PC-9 (cell line): ENCODE measurements at regions of chr19 and their contacts with region 1.

Region 1: DNA sequence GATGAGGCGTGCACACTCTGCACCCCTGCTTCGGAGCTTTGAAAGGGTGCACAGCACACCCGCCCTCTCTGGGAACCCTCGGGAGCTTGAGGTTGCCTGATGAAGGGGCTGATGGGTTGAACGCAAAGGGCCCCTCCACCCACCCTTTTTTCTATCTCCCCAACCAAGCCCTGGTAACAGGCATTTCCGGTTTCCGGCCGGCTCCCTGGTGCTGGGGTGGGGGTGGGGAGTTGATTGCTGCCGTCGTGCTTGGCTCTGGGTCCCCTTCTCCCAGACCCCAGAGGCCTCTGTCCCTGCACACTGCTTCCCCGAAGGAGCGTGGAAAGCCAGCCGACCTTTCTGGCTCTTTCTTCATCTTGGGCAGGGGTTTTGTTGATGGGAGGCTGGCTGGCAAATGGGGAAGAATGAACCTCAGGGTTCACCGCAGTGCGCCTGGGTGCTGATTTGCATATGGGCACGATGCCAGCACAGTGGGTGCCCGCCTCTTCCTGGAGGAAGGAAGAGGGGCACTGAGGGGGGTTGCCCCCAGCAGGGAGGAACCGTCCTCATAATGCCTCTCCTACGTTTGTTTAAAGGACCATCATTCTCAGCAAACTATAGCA is 29.1 kb downstream of the VAV1 start:
- DNase-seq: peak; percentile 62 to 66
- H3K4me3 ChIP-seq: peak overlapping the region; percentile 57
- H3K27ac ChIP-seq: peak overlapping the region; percentile 96
- H3K4me1 ChIP-seq: peaks cover 24% of the 10 kb centered on the region
- H3K27me3 ChIP-seq: no peaks in the 10 kb centered on the region
- CTCF ChIP-seq: no peak

Region 2: GRCh38 chr19:6674868-6675305 is 126.7 kb before region 1 on chr19:
- CTCF ChIA-PET with region 1: no interaction called
- POLR2A ChIA-PET with region 1: no interaction called
- intact Hi-C with region 1: no loop called
- DNase-seq: peak; percentile 75 to 79
- H3K4me3 ChIP-seq: peak overlapping the region; percentile 38; the same call in 1 of the 2 replicates
- H3K27ac ChIP-seq: peak overlapping the region; percentile 77
- H3K4me1 ChIP-seq: peaks cover 38% of the 10 kb centered on the region
- H3K27me3 ChIP-seq: no peaks in the 10 kb centered on the region
- CTCF ChIP-seq: no peak

Region 3: DNA sequence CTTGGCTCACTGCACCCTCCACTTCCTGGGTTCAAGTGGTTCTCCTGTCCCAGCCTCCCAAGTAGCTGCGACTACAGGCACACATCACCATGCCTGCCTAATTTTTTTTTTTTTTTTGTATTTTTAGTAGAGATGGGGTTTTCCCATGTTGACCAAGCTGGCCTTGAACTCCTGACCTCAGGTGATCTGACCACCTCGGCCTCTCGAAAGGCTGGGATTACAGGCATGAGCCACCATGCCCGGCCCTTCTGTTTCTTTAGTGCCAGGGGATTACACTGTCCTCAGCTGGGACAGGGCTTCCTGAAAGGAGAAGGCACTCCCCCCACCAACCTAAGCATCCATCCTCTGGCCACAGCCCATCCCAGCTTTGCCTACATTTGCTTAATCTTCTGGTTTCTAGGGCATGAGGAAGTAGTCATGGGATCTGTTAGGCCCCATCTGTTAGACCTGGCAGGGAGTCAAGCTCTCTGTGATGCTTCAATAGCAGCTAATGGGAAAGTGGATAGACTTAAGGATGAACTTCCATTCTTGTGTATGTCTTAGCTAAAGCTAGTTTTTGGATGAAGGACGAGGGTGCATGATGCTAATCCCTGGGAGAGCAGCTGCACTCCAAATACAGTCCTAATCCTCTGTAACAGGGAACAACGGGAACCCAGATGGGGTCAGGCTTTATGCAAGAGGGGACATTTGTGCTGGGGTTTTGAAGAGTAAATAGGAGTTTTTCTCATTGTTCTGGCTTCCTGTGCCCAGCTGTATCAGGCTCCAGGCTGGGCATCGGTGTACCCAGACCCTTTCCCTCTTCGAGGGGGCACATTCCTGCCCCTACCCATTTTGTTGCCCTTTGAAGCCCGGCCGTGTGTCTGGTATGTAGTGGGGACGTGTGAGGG is 26.5 kb before region 1 on chr19:
- CTCF ChIA-PET with region 1: interaction called, 3 read pairs
- POLR2A ChIA-PET with region 1: interaction called, 16 read pairs
- intact Hi-C with region 1: no loop called
- DNase-seq: no peak
- H3K4me3 ChIP-seq: no peak overlapping the region
- H3K27ac ChIP-seq: no peak overlapping the region
- H3K4me1 ChIP-seq: no peaks in the 10 kb centered on the region
- H3K27me3 ChIP-seq: no peaks in the 10 kb centered on the region
- CTCF ChIP-seq: no peak

Region 4: GRCh38 chr19:6811906-6812305 is 10.3 kb after region 1 on chr19:
- CTCF ChIA-PET with region 1: no interaction called
- POLR2A ChIA-PET with region 1: no interaction called
- intact Hi-C with region 1: no loop called
- DNase-seq: peak in 1 of 2 experiments; percentile 54
- H3K4me3 ChIP-seq: no peak overlapping the region
- H3K27ac ChIP-seq: no peak overlapping the region
- H3K4me1 ChIP-seq: peaks cover 9% of the 10 kb centered on the region
- H3K27me3 ChIP-seq: no peaks in the 10 kb centered on the region
- CTCF ChIP-seq: no peak

Region 5: DNA sequence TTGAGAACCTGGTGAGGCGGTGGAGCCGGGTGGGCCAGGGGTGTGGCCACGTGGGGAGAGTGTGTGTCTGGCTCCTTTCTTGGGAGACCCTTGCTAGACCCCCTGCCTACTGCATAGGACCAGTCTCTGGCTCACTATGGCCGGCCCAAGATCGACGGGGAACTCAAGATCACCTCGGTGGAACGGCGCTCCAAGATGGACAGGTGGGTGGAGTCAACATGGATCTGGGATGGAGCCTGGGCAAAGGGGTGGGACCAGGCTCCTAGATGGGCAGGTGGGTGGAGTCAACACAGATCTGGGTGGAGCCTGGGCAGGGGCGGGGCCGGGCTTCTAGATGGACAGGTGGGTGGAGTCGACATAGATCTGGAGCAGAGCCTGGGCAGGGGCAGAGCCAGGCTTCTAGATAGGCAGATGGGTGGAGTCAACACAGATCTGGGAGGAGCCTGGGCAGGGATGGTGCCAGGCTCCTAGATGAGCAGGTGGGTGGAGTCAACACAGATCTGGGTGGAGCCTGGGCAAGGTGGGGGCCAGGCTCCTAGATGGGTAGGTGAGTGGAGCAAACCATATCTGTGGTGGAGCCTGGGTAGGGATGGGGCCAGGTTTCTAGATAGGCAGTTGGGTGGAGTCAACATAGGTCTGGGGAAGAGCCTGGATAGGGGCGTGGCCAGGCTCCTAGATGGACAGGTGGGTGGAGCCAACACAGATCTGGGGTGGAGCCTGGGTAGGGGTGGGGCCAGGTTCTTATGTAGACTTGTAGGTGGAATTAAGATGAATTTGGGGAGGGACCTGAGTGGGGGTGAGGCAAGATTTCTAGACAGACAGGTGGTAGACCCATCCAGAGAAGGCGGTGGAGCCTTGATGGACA is 27.3 kb after region 1 on chr19:
- CTCF ChIA-PET with region 1: interaction called, 3 read pairs
- POLR2A ChIA-PET with region 1: interaction called, 7 read pairs
- intact Hi-C with region 1: loop called (anchors 2 kb)
- DNase-seq: peak; percentile 83 to 88
- H3K4me3 ChIP-seq: peak overlapping the region; percentile 73
- H3K27ac ChIP-seq: peak overlapping the region; percentile 82
- H3K4me1 ChIP-seq: peaks cover 8% of the 10 kb centered on the region
- H3K27me3 ChIP-seq: no peaks in the 10 kb centered on the region
- CTCF ChIP-seq: no peak

Region 6: DNA sequence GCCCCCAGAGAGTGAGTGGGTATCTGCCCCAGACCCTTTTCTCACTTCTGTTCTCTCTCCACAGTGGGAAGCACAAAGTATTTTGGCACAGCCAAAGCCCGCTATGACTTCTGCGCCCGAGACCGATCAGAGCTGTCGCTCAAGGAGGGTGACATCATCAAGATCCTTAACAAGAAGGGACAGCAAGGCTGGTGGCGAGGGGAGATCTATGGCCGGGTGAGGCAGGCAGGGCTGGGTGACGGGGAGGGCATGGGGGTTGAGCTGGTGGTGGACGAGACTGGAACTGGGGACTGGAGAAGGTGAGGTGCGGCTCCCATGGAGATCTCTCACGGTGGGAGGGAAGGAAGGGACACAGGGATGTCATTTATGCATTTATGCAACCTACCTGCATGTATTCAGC is 52.3 kb after region 1 on chr19:
- CTCF ChIA-PET with region 1: no interaction called
- POLR2A ChIA-PET with region 1: no interaction called
- intact Hi-C with region 1: no loop called
- DNase-seq: no peak
- H3K4me3 ChIP-seq: no peak overlapping the region
- H3K27ac ChIP-seq: no peak overlapping the region
- H3K4me1 ChIP-seq: no peaks in the 10 kb centered on the region
- H3K27me3 ChIP-seq: no peaks in the 10 kb centered on the region
- CTCF ChIP-seq: no peak